H1 (cell line): ENCODE measurements at regions of chr2 and their contacts with region 1.

Region 1: GRCh38 chr2:204177977-204178540 is 241.5 kb downstream of the ICOS start:
- DNase-seq: peak; percentile 29 to 86
- H3K4me3 ChIP-seq: no peak overlapping the region
- H3K27ac ChIP-seq: no peak overlapping the region
- H3K4me1 ChIP-seq: no peaks in the 10 kb centered on the region
- H3K27me3 ChIP-seq: peaks cover 0 to 1% (median 0%) of the 10 kb centered on the region in 4 experiments; a peak in 1 of 7 replicates
- CTCF ChIP-seq: peak; percentile 41 to 70 (median 64)
- EP300 ChIP-seq: no peak
- POLR2A ChIP-seq: no peak
- RAD21 ChIP-seq: peak; percentile 56 to 70

Region 2: GRCh38 chr2:204072443-204073324 is 105.4 kb before region 1 on chr2:
- CTCF ChIA-PET with region 1: interaction called, 23 read pairs
- POLR2A ChIA-PET with region 1: no interaction called
- DNase-seq: peak; percentile 38 to 90
- H3K4me3 ChIP-seq: no peak overlapping the region
- H3K27ac ChIP-seq: no peak overlapping the region
- H3K4me1 ChIP-seq: no peaks in the 10 kb centered on the region
- H3K27me3 ChIP-seq: no peaks in the 10 kb centered on the region
- CTCF ChIP-seq: peak; percentile 71 to 75 (median 74)
- EP300 ChIP-seq: no peak
- POLR2A ChIP-seq: no peak
- RAD21 ChIP-seq: peak; percentile 82 to 86

Region 3: DNA sequence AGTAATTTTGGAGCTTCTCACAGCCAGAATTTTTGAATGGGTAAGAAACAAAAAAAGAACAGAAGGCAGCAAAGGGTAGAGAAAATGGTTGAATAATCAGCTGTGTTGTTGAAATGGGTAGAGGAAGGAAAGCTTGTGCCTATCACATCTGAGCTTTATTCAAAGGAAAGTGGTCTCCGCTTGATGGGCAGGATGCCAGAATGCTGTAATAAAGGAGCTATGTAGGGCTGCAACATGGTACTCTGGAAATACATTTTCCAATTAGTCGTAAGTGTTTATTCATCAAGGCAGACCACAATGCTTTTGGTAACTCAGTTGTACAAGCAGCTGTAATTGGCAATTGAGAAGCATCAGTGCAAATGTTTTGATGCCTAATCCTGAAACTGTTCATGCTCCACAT is 44.6 kb before region 1 on chr2:
- CTCF ChIA-PET with region 1: interaction called, 11 read pairs
- POLR2A ChIA-PET with region 1: no interaction called
- DNase-seq: peak in 1 of 2 experiments; percentile 14
- H3K4me3 ChIP-seq: no peak overlapping the region
- H3K27ac ChIP-seq: no peak overlapping the region
- H3K4me1 ChIP-seq: peaks cover 0 to 4% (median 0%) of the 10 kb centered on the region in 4 experiments; a peak in 1 of 7 replicates
- H3K27me3 ChIP-seq: no peaks in the 10 kb centered on the region
- CTCF ChIP-seq: no peak
- EP300 ChIP-seq: no peak
- POLR2A ChIP-seq: no peak
- RAD21 ChIP-seq: no peak

Region 4: GRCh38 chr2:204145263-204145751 is 32.8 kb before region 1 on chr2:
- CTCF ChIA-PET with region 1: interaction called, 70 read pairs
- POLR2A ChIA-PET with region 1: no interaction called
- DNase-seq: peak; percentile 56 to 92
- H3K4me3 ChIP-seq: no peak overlapping the region; a peak in 1 of 8 replicates
- H3K27ac ChIP-seq: no peak overlapping the region
- H3K4me1 ChIP-seq: no peaks in the 10 kb centered on the region
- H3K27me3 ChIP-seq: no peaks in the 10 kb centered on the region
- CTCF ChIP-seq: peak; percentile 86 to 90 (median 89)
- EP300 ChIP-seq: no peak
- POLR2A ChIP-seq: no peak
- RAD21 ChIP-seq: peak; percentile 96 to 98

Region 5: DNA sequence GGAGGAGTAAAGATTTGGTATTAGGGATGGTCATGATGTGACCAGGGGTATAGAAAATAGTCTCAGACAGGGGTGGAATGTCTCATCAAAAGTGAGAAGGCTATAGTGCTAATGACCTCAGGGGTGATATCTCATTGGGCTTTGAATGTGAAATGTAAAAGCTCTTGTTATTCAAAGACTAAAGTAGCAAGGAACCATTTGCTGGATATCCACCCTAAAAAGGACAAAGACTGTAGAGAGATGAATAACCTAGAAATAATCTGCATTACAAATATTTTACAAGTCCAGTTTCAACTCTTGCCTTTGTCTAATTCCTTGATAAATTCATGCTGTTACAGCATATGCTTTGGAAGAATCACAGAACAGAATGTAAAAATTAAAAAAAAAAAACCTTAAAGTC is 17.1 kb before region 1 on chr2:
- CTCF ChIA-PET with region 1: interaction called, 41 read pairs
- POLR2A ChIA-PET with region 1: no interaction called
- DNase-seq: no peak
- H3K4me3 ChIP-seq: no peak overlapping the region
- H3K27ac ChIP-seq: no peak overlapping the region
- H3K4me1 ChIP-seq: 0 out of 7 replicates have a peak, but pooled peaks cover 0 to 2% (median 0%) of the 10 kb centered on the region in 4 experiments
- H3K27me3 ChIP-seq: no peaks in the 10 kb centered on the region
- CTCF ChIP-seq: no peak
- EP300 ChIP-seq: no peak
- POLR2A ChIP-seq: no peak
- RAD21 ChIP-seq: no peak

Region 6: GRCh38 chr2:204265681-204266181 is 87.7 kb after region 1 on chr2:
- CTCF ChIA-PET with region 1: interaction called, 13 read pairs
- POLR2A ChIA-PET with region 1: no interaction called
- DNase-seq: no peak
- H3K4me3 ChIP-seq: no peak overlapping the region
- H3K27ac ChIP-seq: no peak overlapping the region
- H3K4me1 ChIP-seq: peaks cover 2 to 11% (median 6%) of the 10 kb centered on the region in 4 experiments; a peak in 4 of 7 replicates
- H3K27me3 ChIP-seq: no peaks in the 10 kb centered on the region; a peak in 1 of 7 replicates
- CTCF ChIP-seq: no peak
- EP300 ChIP-seq: no peak
- POLR2A ChIP-seq: no peak
- RAD21 ChIP-seq: no peak